ENCODE measurements at regions of chr19 and their contacts with region 1.

Region 1: GRCh38 chr19:42794765-42795164 is 29.3 kb upstream of the PSG8 start:
- DNase-seq: no peak
- H3K4me3 ChIP-seq: no peak overlapping the region
- H3K27ac ChIP-seq: no peak overlapping the region
- H3K4me1 ChIP-seq: no peaks in the 10 kb centered on the region
- H3K27me3 ChIP-seq: no peaks in the 10 kb centered on the region
- CTCF ChIP-seq: no peak
- POLR2A ChIP-seq: no peak

Region 2: DNA sequence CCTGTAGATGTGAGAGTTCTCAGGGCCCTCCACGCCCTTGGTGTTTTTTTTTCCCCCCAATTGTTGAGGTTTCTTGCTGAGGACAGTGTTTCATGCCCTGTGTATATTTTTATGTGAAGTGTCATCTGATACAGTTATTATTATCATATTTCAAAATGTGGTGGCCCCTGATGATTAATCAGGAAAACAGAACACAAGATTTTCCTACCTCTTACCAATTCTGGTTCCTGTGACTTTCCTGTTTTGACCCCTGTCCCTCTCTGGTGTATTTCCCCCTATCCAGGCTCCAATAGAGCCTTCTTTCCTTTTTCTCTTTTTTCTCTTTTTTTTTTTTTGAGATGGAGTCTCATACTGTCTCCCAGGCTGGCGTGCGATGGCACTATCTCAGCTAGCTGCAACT is 29.9 kb before region 1 on chr19:
- CTCF ChIA-PET with region 1: no interaction called
- POLR2A ChIA-PET with region 1: no interaction called
- dilution Hi-C with region 1: no loop called
- intact Hi-C with region 1: no loop called
- DNase-seq: no peak
- H3K4me3 ChIP-seq: no peak overlapping the region
- H3K27ac ChIP-seq: no peak overlapping the region
- H3K4me1 ChIP-seq: no peaks in the 10 kb centered on the region
- H3K27me3 ChIP-seq: no peaks in the 10 kb centered on the region
- CTCF ChIP-seq: no peak
- POLR2A ChIP-seq: no peak

Region 3: DNA sequence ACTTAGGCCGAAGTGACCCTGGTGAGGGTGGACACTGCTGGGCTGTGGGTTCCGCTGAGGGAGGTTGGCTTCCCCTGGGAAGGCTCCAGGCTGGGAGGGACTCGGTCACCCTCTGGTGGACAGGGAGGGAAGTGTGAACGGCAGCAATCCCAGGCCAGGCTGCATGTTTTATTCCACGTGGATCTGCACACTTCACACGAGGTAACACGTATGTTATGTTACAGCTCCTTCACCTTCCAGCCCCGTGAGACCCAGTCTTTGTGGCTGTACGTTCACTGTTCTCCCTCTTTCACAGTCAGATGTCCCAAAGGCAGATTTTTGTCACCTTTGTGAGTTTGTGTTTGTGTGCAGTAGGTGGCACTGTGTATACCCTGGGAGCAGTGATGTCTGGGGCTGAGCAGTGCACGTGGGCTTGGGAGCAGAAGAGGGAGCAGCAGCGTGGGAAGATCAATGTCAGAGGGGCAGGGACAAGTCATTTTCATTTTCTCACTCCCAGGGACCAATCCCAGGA is 124.8 kb after region 1 on chr19:
- CTCF ChIA-PET with region 1: no interaction called
- POLR2A ChIA-PET with region 1: no interaction called
- dilution Hi-C with region 1: no loop called
- intact Hi-C with region 1: loop called (anchors 10 kb)
- DNase-seq: no peak
- H3K4me3 ChIP-seq: no peak overlapping the region
- H3K27ac ChIP-seq: no peak overlapping the region
- H3K4me1 ChIP-seq: no peaks in the 10 kb centered on the region
- H3K27me3 ChIP-seq: no peaks in the 10 kb centered on the region
- CTCF ChIP-seq: no peak
- POLR2A ChIP-seq: no peak

Measured in endothelial cell of umbilical vein (primary cell).